Aorta (tissue), 5 donors: ENCODE measurements at regions of chr3 and their contacts with region 1.

Region 1: GRCh38 chr3:113745273-113746068 is 578 bp downstream of the NAA50 start:
- DNase-seq: peak; percentile 71 to 88
- ATAC-seq: peak; percentile 85
- H3K4me3 ChIP-seq: peak overlapping the region; percentile 52 to 70
- H3K27ac ChIP-seq: peak overlapping the region; percentile 20 to 94
- H3K4me1 ChIP-seq: peaks cover 3 to 4% of the 10 kb centered on the region in 2 donors
- H3K27me3 ChIP-seq: no peaks in the 10 kb centered on the region

Region 2: DNA sequence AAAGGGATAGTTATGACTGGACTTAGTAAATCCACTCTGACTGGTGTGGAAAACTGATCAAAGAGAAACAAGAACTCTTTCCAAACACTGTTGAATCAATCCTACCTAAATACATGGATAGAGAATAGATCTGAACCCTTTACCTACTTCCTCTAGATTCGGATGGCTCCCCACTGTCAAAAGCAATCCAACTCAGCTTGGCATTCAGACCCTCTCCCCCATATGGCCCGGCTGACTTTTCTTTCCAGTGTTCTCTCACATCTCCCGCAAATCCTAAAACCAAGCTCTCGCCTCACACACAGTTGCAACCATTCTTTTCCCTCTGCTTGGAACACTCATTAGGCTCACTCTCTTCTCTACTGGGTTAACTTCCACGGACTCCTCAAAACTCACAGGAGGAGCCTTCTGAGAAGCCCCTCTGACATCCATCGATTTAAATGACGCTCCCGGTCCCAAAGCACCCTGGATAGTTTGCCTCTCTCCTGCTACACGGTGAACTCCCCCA is 231.2 kb before region 1 on chr3:
- intact Hi-C with region 1: loop called in 1 of 2 experiments (anchors 10 kb)
- DNase-seq: no peak
- ATAC-seq: peak; percentile 24
- H3K4me3 ChIP-seq: peak overlapping the region; percentile 54 to 58
- H3K27ac ChIP-seq: peak overlapping the region in 1 of 2 donors; percentile 0
- H3K4me1 ChIP-seq: no peaks in the 10 kb centered on the region
- H3K27me3 ChIP-seq: no peaks in the 10 kb centered on the region

Region 3: GRCh38 chr3:113696658-113697499 is 48.6 kb before region 1 on chr3:
- intact Hi-C with region 1: loop called in 1 of 2 experiments (anchors 1 kb)
- DNase-seq: peak; percentile 99 to 100
- ATAC-seq: peak; percentile 98
- H3K4me3 ChIP-seq: peak overlapping the region; percentile 78 to 88
- H3K27ac ChIP-seq: peak overlapping the region; percentile 50 to 65
- H3K4me1 ChIP-seq: peaks cover 0 to 8% of the 10 kb centered on the region in 2 donors
- H3K27me3 ChIP-seq: no peaks in the 10 kb centered on the region

Region 4: DNA sequence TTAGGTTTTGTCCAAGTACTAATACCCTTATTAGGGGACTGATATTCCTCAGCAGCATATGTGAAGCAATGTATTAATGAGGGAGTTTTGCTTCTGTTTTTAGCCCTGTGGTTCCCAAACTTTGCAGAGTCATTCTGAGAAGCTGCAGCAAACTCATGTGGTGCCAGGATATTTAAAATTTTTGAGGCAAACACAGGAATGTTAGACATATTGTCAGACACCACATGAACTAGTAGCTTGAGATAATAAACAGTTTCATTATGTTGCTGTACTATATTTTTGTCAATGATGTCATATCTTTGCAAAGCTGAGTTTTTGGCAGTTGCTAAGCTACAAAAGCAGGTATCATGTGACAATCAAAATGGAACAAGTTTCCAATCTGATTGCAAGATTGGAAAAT is 38.0 kb after region 1 on chr3:
- intact Hi-C with region 1: loop called in 1 of 2 experiments (anchors 5 kb)
- DNase-seq: no peak
- ATAC-seq: no peak
- H3K4me3 ChIP-seq: no peak overlapping the region
- H3K27ac ChIP-seq: no peak overlapping the region
- H3K4me1 ChIP-seq: no peaks in the 10 kb centered on the region
- H3K27me3 ChIP-seq: no peaks in the 10 kb centered on the region

Region 5: GRCh38 chr3:114056130-114057010 is 310.9 kb after region 1 on chr3 and contains the starts of genes CCDC191 and QTRT2:
- intact Hi-C with region 1: loop called in 1 of 2 experiments (anchors 5 kb)
- DNase-seq: peak; percentile 99
- ATAC-seq: peak; percentile 100
- H3K4me3 ChIP-seq: peak within 1 kb of the TSS; percentile 81 to 88
- H3K27ac ChIP-seq: peak within 1 kb of the TSS in 1 of 2 donors; percentile 72
- H3K4me1 ChIP-seq: peaks cover 0 to 2% of the 10 kb centered on the region in 2 donors
- H3K27me3 ChIP-seq: no peaks in the 10 kb centered on the region
- total RNA-seq, gene CCDC191: 2.6 to 8.6 TPM
- total RNA-seq, gene QTRT2: 16.2 to 23.4 TPM

Region 6: GRCh38 chr3:114144909-114145647 is 399.6 kb after region 1 on chr3:
- intact Hi-C with region 1: loop called in 1 of 2 experiments (anchors 5 kb)
- DNase-seq: peak in 1 of 2 donors; percentile 71
- ATAC-seq: peak; percentile 84
- H3K4me3 ChIP-seq: no peak overlapping the region
- H3K27ac ChIP-seq: no peak overlapping the region
- H3K4me1 ChIP-seq: peaks cover 3% of the 10 kb centered on the region in 2 donors
- H3K27me3 ChIP-seq: no peaks in the 10 kb centered on the region